Activated CD4-positive, alpha-beta T cell treated with anti-CD3 and anti-CD28 coated beads for 36 hours (primary cell): ENCODE measurements at regions of chr12 and their contacts with region 1.

Region 1: DNA sequence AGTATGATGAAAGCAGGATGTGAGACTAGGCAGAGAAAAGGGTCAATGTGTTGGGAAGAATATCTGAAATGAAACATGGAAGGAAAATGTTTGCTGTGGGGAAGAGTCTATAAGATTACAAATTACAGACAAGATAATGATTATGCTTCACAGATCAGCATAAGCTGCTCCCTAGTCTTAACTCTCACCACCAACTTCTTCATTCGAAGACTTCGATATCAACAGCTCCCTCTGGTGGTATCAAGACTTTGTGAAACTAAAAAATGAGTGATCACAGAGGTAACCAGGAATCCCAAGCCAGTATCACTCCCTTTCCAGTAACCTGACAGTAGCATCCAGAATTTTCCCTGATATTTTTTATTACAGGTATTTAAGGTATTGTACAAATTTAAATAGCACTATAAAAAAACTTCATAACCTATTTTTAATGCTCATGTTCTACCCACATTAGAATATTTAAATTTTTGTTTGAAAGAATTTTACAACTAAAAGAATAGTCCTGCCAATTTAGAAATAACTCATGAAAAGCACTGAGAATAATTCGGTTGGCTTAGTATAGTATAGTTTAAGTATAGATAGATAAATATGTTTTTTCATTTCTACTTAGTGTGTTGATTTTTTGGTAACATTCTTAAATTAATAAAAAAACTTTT is 84.4 kb downstream of the C2CD5 start:
- DNase-seq: no peak
- ATAC-seq: peak; percentile 64
- H3K4me3 Mint-ChIP-seq: no peak overlapping the region
- H3K27ac Mint-ChIP-seq: no peak overlapping the region
- H3K4me1 Mint-ChIP-seq: no peaks in the 10 kb centered on the region
- H3K27me3 Mint-ChIP-seq: no peaks in the 10 kb centered on the region

Region 2: DNA sequence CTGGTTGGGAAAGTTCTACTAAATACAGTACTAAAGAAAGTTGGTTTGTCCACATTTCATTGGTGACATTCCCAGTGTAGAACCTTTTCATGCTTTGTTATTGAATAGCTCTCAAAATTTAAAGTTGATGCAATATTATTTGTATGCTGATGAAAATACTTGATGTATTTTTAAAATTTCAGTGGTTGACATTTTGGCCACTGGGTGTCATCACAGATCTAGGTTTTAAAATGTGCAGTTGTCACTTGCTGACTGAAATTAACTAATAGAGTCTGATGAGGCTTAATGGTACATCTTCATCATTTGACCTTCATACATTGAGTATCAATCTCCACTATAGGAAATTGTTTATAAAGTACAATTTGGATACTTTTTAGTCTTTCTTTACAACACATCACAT is 376.8 kb before region 1 on chr12:
- CTCF ChIA-PET with region 1: interaction called, 11 read pairs
- POLR2A ChIA-PET with region 1: no interaction called
- intact Hi-C with region 1: no loop called
- DNase-seq: peak; percentile 16
- ATAC-seq: no peak
- H3K4me3 Mint-ChIP-seq: no peak overlapping the region
- H3K27ac Mint-ChIP-seq: no peak overlapping the region
- H3K4me1 Mint-ChIP-seq: no peaks in the 10 kb centered on the region
- H3K27me3 Mint-ChIP-seq: no peaks in the 10 kb centered on the region

Region 3: GRCh38 chr12:22473212-22473611 is 13.2 kb after region 1 on chr12:
- CTCF ChIA-PET with region 1: interaction called, 11 read pairs
- POLR2A ChIA-PET with region 1: no interaction called
- intact Hi-C with region 1: no loop called
- DNase-seq: no peak
- ATAC-seq: no peak
- H3K4me3 Mint-ChIP-seq: no peak overlapping the region
- H3K27ac Mint-ChIP-seq: no peak overlapping the region
- H3K4me1 Mint-ChIP-seq: peaks cover 21% of the 10 kb centered on the region
- H3K27me3 Mint-ChIP-seq: no peaks in the 10 kb centered on the region

Region 4: GRCh38 chr12:23536293-23536692 is 1076.3 kb after region 1 on chr12:
- CTCF ChIA-PET with region 1: no interaction called
- POLR2A ChIA-PET with region 1: no interaction called
- intact Hi-C with region 1: no loop called
- DNase-seq: no peak
- ATAC-seq: no peak
- H3K4me3 Mint-ChIP-seq: no peak overlapping the region
- H3K27ac Mint-ChIP-seq: no peak overlapping the region
- H3K4me1 Mint-ChIP-seq: no peaks in the 10 kb centered on the region
- H3K27me3 Mint-ChIP-seq: no peaks in the 10 kb centered on the region